Esophagus muscularis mucosa (tissue), 4 donors: ENCODE measurements at regions of chr11 and their contacts with region 1.

Region 1: GRCh38 chr11:65418711-65419459 is 3.7 kb upstream of the NEAT1 start:
- DNase-seq: peak; percentile 99
- H3K4me3 ChIP-seq: peak overlapping the region; percentile 71 to 81 (median 74)
- H3K27ac ChIP-seq: peak overlapping the region; percentile 97 to 99 (median 99)
- H3K4me1 ChIP-seq: peaks cover 52 to 66% (median 65%) of the 10 kb centered on the region in 4 donors
- H3K27me3 ChIP-seq: no peaks in the 10 kb centered on the region
- CTCF ChIP-seq: no peak
- EP300 ChIP-seq: peak; percentile 12
- POLR2A ChIP-seq: peak; percentile 40

Region 2: GRCh38 chr11:65078151-65078550 is 340.7 kb before region 1 on chr11:
- intact Hi-C with region 1: no loop called
- DNase-seq: no peak
- H3K4me3 ChIP-seq: no peak overlapping the region
- H3K27ac ChIP-seq: no peak overlapping the region
- H3K4me1 ChIP-seq: peaks cover 0 to 2% (median 1%) of the 10 kb centered on the region in 4 donors
- H3K27me3 ChIP-seq: no peaks in the 10 kb centered on the region
- CTCF ChIP-seq: peak; percentile 29 to 56 (median 39)
- EP300 ChIP-seq: no peak
- POLR2A ChIP-seq: no peak

Region 3: GRCh38 chr11:65189191-65189590 is 229.7 kb before region 1 on chr11:
- intact Hi-C with region 1: no loop called
- DNase-seq: no peak
- H3K4me3 ChIP-seq: no peak overlapping the region
- H3K27ac ChIP-seq: no peak overlapping the region
- H3K4me1 ChIP-seq: peaks cover 0 to 5% (median 3%) of the 10 kb centered on the region in 4 donors
- H3K27me3 ChIP-seq: no peaks in the 10 kb centered on the region
- CTCF ChIP-seq: no peak
- EP300 ChIP-seq: no peak
- POLR2A ChIP-seq: no peak

Region 4: DNA sequence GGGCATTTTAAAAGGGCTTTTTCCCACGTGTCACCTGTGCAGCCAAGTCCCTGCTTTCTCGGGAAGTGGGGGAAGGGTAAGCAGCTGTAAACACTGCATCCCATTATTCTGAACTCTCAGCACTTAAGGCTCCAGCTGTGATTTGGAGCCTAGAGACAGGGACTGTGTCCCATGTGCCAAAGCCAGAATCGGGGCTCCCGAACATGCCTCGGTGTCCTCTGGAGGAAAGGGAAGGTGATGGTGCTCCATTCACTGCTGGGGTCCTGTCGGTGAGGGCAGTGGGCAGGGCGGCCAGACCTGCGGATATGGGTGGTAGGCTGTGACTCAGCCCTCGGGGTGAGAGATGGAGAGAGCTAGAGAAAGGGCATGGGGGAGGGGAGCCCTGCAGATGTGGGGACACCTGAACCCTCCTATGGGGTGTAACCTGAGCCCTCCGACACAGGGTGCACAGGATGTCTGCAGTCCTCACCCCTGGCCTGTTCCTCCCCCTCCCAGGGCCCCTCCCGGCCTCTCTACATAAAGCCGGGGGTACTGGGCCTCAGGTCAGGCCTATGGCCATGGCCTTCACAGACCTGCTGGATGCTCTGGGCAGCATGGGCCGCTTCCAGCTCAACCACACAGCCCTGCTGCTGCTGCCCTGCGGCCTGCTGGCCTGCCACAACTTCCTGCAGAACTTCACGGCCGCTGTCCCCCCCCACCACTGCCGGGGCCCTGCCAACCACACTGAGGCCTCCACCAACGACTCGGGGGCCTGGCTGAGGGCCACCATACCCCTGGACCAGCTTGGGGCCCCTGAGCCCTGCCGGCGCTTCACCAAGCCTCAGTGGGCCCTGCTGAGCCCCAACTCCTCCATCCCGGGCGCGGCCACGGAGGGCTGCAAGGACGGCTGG is 205.3 kb before region 1 on chr11:
- intact Hi-C with region 1: no loop called
- DNase-seq: no peak
- H3K4me3 ChIP-seq: no peak overlapping the region
- H3K27ac ChIP-seq: no peak overlapping the region
- H3K4me1 ChIP-seq: peaks cover 0 to 5% (median 0%) of the 10 kb centered on the region in 4 donors
- H3K27me3 ChIP-seq: no peaks in the 10 kb centered on the region
- CTCF ChIP-seq: no peak
- EP300 ChIP-seq: no peak
- POLR2A ChIP-seq: no peak

Region 5: DNA sequence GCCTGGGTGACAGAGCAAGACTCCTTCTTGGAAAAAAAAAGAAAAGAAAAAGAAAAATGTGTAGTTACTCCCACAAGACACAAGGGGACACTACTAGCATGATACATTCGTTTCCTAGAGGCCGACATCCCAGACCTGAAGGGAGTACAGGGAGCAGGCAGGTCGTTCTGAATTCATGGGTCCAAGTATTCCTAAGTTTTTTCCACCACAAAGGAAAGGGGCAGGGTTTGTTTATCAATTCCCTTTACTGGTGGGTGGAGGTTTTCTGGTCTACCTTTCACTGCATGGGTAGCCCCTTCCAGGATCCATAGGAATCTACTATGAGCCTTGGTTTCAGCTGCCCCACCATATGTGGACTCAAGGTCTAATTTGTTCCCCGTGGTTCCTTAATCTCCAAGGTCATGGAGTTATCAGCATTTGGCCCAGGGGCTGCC is 52.5 kb before region 1 on chr11:
- intact Hi-C with region 1: loop called (anchors 10 kb)
- DNase-seq: no peak
- H3K4me3 ChIP-seq: no peak overlapping the region
- H3K27ac ChIP-seq: no peak overlapping the region
- H3K4me1 ChIP-seq: peaks cover 7 to 11% (median 8%) of the 10 kb centered on the region in 4 donors
- H3K27me3 ChIP-seq: no peaks in the 10 kb centered on the region
- CTCF ChIP-seq: peak; percentile 73 to 90 (median 86)
- EP300 ChIP-seq: no peak
- POLR2A ChIP-seq: no peak

Region 6: GRCh38 chr11:65382033-65382807 is 36.7 kb before region 1 on chr11 and contains the start of gene SLC25A45:
- intact Hi-C with region 1: loop called (anchors 5 kb)
- DNase-seq: peak; percentile 98
- H3K4me3 ChIP-seq: peak within 1 kb of the TSS; percentile 55 to 62 (median 56)
- H3K27ac ChIP-seq: peak within 1 kb of the TSS; percentile 95 to 98 (median 96)
- H3K4me1 ChIP-seq: peaks cover 56 to 62% (median 59%) of the 10 kb centered on the region in 4 donors
- H3K27me3 ChIP-seq: no peaks in the 10 kb centered on the region
- CTCF ChIP-seq: peak; percentile 88 to 98 (median 90)
- EP300 ChIP-seq: no peak
- POLR2A ChIP-seq: no peak
- total RNA-seq, gene SLC25A45: 4.6 to 11.3 (median 5.9) TPM

Region 7: DNA sequence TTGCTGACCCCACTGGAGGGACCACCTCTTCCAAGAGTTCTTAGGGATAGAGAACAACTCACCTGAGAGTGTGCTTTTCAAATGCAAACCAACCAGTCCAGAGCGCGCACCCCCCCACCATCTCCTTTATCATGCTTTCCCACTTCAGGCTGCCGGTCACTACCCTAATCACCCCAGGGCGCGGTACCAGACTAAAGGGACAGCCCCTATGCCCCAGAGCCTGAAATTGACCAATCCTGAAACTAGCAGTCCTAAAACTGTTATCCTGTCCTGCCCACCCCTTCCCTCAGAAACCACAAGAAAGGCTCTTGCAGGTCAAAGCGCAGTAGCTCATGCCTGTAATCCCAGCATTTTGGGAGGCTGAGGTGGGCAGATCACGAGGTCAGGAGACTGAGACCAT is 40.7 kb after region 1 on chr11:
- intact Hi-C with region 1: no loop called
- DNase-seq: no peak
- H3K4me3 ChIP-seq: no peak overlapping the region
- H3K27ac ChIP-seq: no peak overlapping the region
- H3K4me1 ChIP-seq: peaks cover 10 to 19% (median 14%) of the 10 kb centered on the region in 4 donors
- H3K27me3 ChIP-seq: no peaks in the 10 kb centered on the region
- CTCF ChIP-seq: no peak
- EP300 ChIP-seq: no peak
- POLR2A ChIP-seq: no peak

Region 8: GRCh38 chr11:65479184-65480145 is 60.6 kb after region 1 on chr11:
- intact Hi-C with region 1: loop called (anchors 2 kb)
- DNase-seq: no peak
- H3K4me3 ChIP-seq: peak overlapping the region; percentile 66 to 82 (median 74)
- H3K27ac ChIP-seq: peak overlapping the region; percentile 95 to 99 (median 98)
- H3K4me1 ChIP-seq: peaks cover 58 to 73% (median 72%) of the 10 kb centered on the region in 4 donors
- H3K27me3 ChIP-seq: no peaks in the 10 kb centered on the region
- CTCF ChIP-seq: peak; percentile 21 to 44 (median 33)
- EP300 ChIP-seq: no peak
- POLR2A ChIP-seq: no peak

Region 9: DNA sequence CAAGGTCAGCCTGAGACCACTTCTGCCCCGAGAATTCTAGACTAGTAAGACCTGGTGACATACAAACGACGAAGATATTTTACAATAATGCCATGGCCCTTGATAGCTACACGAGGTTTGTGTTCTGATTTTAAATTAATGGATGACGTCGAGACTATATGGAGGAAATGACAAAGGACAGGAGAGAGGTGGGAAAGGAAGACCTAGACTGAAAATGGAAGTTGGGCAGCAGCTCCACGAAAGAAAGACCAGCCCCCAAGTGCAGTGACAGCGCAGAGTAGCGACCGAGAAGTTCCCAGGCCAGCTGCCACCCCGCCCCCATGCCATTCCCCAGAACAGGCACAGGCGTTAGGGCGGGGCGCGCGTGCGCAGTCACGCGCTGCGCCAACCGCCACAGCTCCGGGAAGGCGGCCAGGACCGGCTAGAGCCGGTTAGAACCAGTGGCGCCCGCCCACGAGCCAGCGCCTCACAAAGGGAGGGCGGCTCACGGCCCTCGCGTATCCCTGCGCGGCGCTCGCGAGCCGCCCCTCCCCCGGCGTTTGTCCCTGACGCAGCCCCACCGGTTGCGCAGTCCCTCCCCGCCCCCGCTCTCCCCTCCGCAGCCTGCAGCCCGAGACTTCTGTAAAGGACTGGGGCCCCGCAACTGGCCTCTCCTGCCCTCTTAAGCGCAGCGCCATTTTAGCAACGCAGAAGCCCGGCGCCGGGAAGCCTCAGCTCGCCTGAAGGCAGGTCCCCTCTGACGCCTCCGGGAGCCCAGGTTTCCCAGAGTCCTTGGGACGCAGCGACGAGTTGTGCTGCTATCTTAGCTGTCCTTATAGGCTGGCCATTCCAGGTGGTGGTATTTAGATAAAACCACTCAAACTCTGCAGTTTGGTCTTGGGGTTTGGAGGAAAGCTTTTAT is 78.5 kb after region 1 on chr11:
- intact Hi-C with region 1: loop called (anchors 2 kb)
- DNase-seq: peak; percentile 99
- H3K4me3 ChIP-seq: peak overlapping the region; percentile 72 to 82 (median 76)
- H3K27ac ChIP-seq: peak overlapping the region; percentile 95 to 99 (median 98)
- H3K4me1 ChIP-seq: peaks cover 44 to 55% (median 48%) of the 10 kb centered on the region in 4 donors
- H3K27me3 ChIP-seq: no peaks in the 10 kb centered on the region
- CTCF ChIP-seq: peak in 1 of 3 experiments; percentile 18
- EP300 ChIP-seq: peak; percentile 93
- POLR2A ChIP-seq: peak; percentile 73

Region 10: DNA sequence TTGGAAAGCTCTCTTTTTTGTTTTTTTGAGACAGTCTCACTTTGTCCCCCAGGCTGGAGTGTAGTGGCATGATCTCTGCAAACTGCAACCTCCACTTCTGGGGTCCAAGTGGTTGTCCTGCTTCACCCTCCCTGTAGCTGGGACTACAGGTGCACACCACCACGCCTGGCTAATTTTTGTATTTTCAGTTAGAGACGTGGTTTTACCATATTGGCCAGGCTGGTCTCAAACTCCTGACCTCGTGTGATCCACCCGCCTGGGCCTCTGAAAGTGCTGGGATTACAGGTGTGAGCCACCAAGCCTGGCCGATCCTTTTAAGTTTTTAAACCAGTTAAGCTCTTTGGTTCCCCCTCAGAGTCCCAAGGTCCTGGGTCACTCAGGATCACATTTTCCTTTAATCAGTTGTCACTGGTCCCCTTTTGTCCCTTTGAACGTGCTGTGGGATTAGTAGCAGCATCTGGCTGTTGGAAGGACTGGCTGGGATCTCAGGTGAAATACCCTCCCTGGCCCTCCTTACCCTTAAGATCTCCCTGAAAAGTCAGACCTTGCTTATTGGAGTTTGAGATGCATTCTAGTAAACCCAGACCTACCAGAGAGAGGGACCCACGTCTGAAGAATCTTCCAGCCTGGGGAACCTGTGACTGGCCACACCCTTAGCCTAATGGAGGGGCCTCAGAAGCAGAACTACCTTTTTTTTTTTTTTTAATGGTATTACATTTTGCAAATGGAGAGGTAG is 88.1 kb after region 1 on chr11:
- intact Hi-C with region 1: loop called (anchors 2 kb)
- DNase-seq: no peak
- H3K4me3 ChIP-seq: peak overlapping the region; percentile 72 to 82 (median 76)
- H3K27ac ChIP-seq: peak overlapping the region; percentile 95 to 99 (median 98)
- H3K4me1 ChIP-seq: peaks cover 36 to 58% (median 53%) of the 10 kb centered on the region in 4 donors
- H3K27me3 ChIP-seq: no peaks in the 10 kb centered on the region
- CTCF ChIP-seq: no peak
- EP300 ChIP-seq: no peak
- POLR2A ChIP-seq: no peak